Caco-2 (cell line): ENCODE measurements at regions of chr12 and their contacts with region 1.

Region 1: GRCh38 chr12:55926738-55927587 is 731 bp downstream of the PYM1 start:
- DNase-seq: peak; percentile 89 to 95
- H3K4me3 ChIP-seq: peak overlapping the region; percentile 74
- H3K4me3 Mint-ChIP-seq: peak overlapping the region; percentile 98
- H3K27ac Mint-ChIP-seq: peak overlapping the region; percentile 97
- H3K4me1 ChIP-seq: peaks cover 19% of the 10 kb centered on the region
- H3K4me1 Mint-ChIP-seq: peaks cover 35% of the 10 kb centered on the region
- H3K27me3 ChIP-seq: no peaks in the 10 kb centered on the region
- H3K27me3 Mint-ChIP-seq: no peaks in the 10 kb centered on the region
- CTCF ChIP-seq: peak; percentile 79 to 86

Region 2: GRCh38 chr12:55817346-55818139 is 109.4 kb before region 1 on chr12 and contains the starts of genes ORMDL2 and SARNP:
- CTCF ChIA-PET with region 1: interaction called, 4 read pairs
- POLR2A ChIA-PET with region 1: interaction called, 6 read pairs
- intact Hi-C with region 1: loop called (anchors 1 kb)
- DNase-seq: peak; percentile 97 to 99
- H3K4me3 ChIP-seq: peak within 1 kb of the TSS; percentile 83
- H3K4me3 Mint-ChIP-seq: no peak within 1 kb of the TSS
- H3K27ac Mint-ChIP-seq: no peak within 1 kb of the TSS
- H3K4me1 ChIP-seq: peaks cover 7% of the 10 kb centered on the region; the same call in 1 of the 2 replicates
- H3K4me1 Mint-ChIP-seq: peaks cover 30% of the 10 kb centered on the region
- H3K27me3 ChIP-seq: no peaks in the 10 kb centered on the region
- H3K27me3 Mint-ChIP-seq: no peaks in the 10 kb centered on the region
- CTCF ChIP-seq: no peak
- total RNA-seq, gene ORMDL2: 44.0 and 48.3 TPM in 2 replicates
- total RNA-seq, gene SARNP: 70.9 and 77.6 TPM in 2 replicates

Region 3: GRCh38 chr12:55829967-55830600 is 96.9 kb before region 1 on chr12:
- CTCF ChIA-PET with region 1: no interaction called
- POLR2A ChIA-PET with region 1: interaction called, 11 read pairs
- intact Hi-C with region 1: no loop called
- DNase-seq: peak; percentile 41 to 52
- H3K4me3 ChIP-seq: peak overlapping the region; percentile 76
- H3K4me3 Mint-ChIP-seq: peak overlapping the region; percentile 82
- H3K27ac Mint-ChIP-seq: peak overlapping the region; percentile 85
- H3K4me1 ChIP-seq: no peaks in the 10 kb centered on the region
- H3K4me1 Mint-ChIP-seq: peaks cover 12% of the 10 kb centered on the region
- H3K27me3 ChIP-seq: no peaks in the 10 kb centered on the region
- H3K27me3 Mint-ChIP-seq: no peaks in the 10 kb centered on the region
- CTCF ChIP-seq: no peak

Region 4: GRCh38 chr12:55940065-55940732 is 13.2 kb after region 1 on chr12:
- CTCF ChIA-PET with region 1: interaction called, 6 read pairs
- POLR2A ChIA-PET with region 1: no interaction called
- intact Hi-C with region 1: loop called (anchors 1 kb)
- DNase-seq: peak; percentile 84 to 87
- H3K4me3 ChIP-seq: no peak overlapping the region
- H3K4me3 Mint-ChIP-seq: no peak overlapping the region
- H3K27ac Mint-ChIP-seq: no peak overlapping the region
- H3K4me1 ChIP-seq: peaks cover 26% of the 10 kb centered on the region
- H3K4me1 Mint-ChIP-seq: peaks cover 16% of the 10 kb centered on the region
- H3K27me3 ChIP-seq: no peaks in the 10 kb centered on the region
- H3K27me3 Mint-ChIP-seq: no peaks in the 10 kb centered on the region
- CTCF ChIP-seq: peak; percentile 79 to 92

Region 5: GRCh38 chr12:55955800-55956508 is 29.0 kb after region 1 on chr12:
- CTCF ChIA-PET with region 1: interaction called, 11 read pairs
- POLR2A ChIA-PET with region 1: no interaction called
- intact Hi-C with region 1: no loop called
- DNase-seq: peak; percentile 90 to 91
- H3K4me3 ChIP-seq: no peak overlapping the region
- H3K4me3 Mint-ChIP-seq: peak overlapping the region; percentile 60
- H3K27ac Mint-ChIP-seq: peak overlapping the region; percentile 93
- H3K4me1 ChIP-seq: peaks cover 44% of the 10 kb centered on the region
- H3K4me1 Mint-ChIP-seq: peaks cover 41% of the 10 kb centered on the region
- H3K27me3 ChIP-seq: no peaks in the 10 kb centered on the region
- H3K27me3 Mint-ChIP-seq: no peaks in the 10 kb centered on the region
- CTCF ChIP-seq: peak; percentile 69 to 74

Region 6: GRCh38 chr12:55966408-55967281 is 39.7 kb after region 1 on chr12 and contains the start of gene CDK2:
- CTCF ChIA-PET with region 1: no interaction called
- POLR2A ChIA-PET with region 1: no interaction called
- intact Hi-C with region 1: no loop called
- DNase-seq: peak; percentile 91 to 96
- H3K4me3 ChIP-seq: peak within 1 kb of the TSS; percentile 90
- H3K4me3 Mint-ChIP-seq: peak within 1 kb of the TSS; percentile 98
- H3K27ac Mint-ChIP-seq: peak within 1 kb of the TSS; percentile 95
- H3K4me1 ChIP-seq: peaks cover 33% of the 10 kb centered on the region
- H3K4me1 Mint-ChIP-seq: peaks cover 23% of the 10 kb centered on the region
- H3K27me3 ChIP-seq: no peaks in the 10 kb centered on the region
- H3K27me3 Mint-ChIP-seq: no peaks in the 10 kb centered on the region
- CTCF ChIP-seq: no peak
- total RNA-seq, gene CDK2: 103 and 110 TPM in 2 replicates

Region 7: GRCh38 chr12:56029666-56030293 is 102.8 kb after region 1 on chr12:
- CTCF ChIA-PET with region 1: interaction called, 5 read pairs
- POLR2A ChIA-PET with region 1: no interaction called
- intact Hi-C with region 1: loop called (anchors 5 kb)
- DNase-seq: peak; percentile 64 to 78
- H3K4me3 ChIP-seq: no peak overlapping the region
- H3K4me3 Mint-ChIP-seq: peak overlapping the region; percentile 7
- H3K27ac Mint-ChIP-seq: peak overlapping the region; percentile 67
- H3K4me1 ChIP-seq: peaks cover 16% of the 10 kb centered on the region
- H3K4me1 Mint-ChIP-seq: peaks cover 16% of the 10 kb centered on the region
- H3K27me3 ChIP-seq: no peaks in the 10 kb centered on the region
- H3K27me3 Mint-ChIP-seq: no peaks in the 10 kb centered on the region
- CTCF ChIP-seq: peak; percentile 78 to 86

Region 8: GRCh38 chr12:56098592-56098991 is 171.6 kb after region 1 on chr12:
- CTCF ChIA-PET with region 1: no interaction called
- POLR2A ChIA-PET with region 1: no interaction called
- intact Hi-C with region 1: no loop called
- DNase-seq: no peak
- H3K4me3 ChIP-seq: no peak overlapping the region
- H3K4me3 Mint-ChIP-seq: no peak overlapping the region
- H3K27ac Mint-ChIP-seq: no peak overlapping the region
- H3K4me1 ChIP-seq: peaks cover 13% of the 10 kb centered on the region
- H3K4me1 Mint-ChIP-seq: peaks cover 7% of the 10 kb centered on the region
- H3K27me3 ChIP-seq: no peaks in the 10 kb centered on the region
- H3K27me3 Mint-ChIP-seq: no peaks in the 10 kb centered on the region
- CTCF ChIP-seq: no peak